CD4-positive, alpha-beta memory T cell (primary cell): ENCODE measurements at regions of chr13 and their contacts with region 1.

Region 1: GRCh38 chr13:97855570-97856303 is 97.7 kb upstream of the IPO5 start:
- DNase-seq: peak in 3 of 5 donors; percentile 3 to 9 (median 5)
- H3K4me3 ChIP-seq: no peak overlapping the region
- H3K4me3 Mint-ChIP-seq: no peak overlapping the region
- H3K27ac ChIP-seq: no peak overlapping the region
- H3K27ac Mint-ChIP-seq: no peak overlapping the region
- H3K4me1 ChIP-seq: no peaks in the 10 kb centered on the region
- H3K4me1 Mint-ChIP-seq: peaks cover 0 to 1% (median 0%) of the 10 kb centered on the region in 4 donors
- H3K27me3 ChIP-seq: no peaks in the 10 kb centered on the region
- H3K27me3 Mint-ChIP-seq: peaks cover 3 to 7% of the 10 kb centered on the region in 2 donors

Region 2: GRCh38 chr13:96500953-96501352 is 1354.8 kb before region 1 on chr13:
- CTCF ChIA-PET with region 1: no interaction called
- POLR2A ChIA-PET with region 1: no interaction called
- intact Hi-C with region 1: no loop called
- DNase-seq: no peak
- H3K4me3 ChIP-seq: no peak overlapping the region
- H3K4me3 Mint-ChIP-seq: no peak overlapping the region
- H3K27ac ChIP-seq: no peak overlapping the region
- H3K27ac Mint-ChIP-seq: no peak overlapping the region
- H3K4me1 ChIP-seq: no peaks in the 10 kb centered on the region
- H3K4me1 Mint-ChIP-seq: no peaks in the 10 kb centered on the region
- H3K27me3 ChIP-seq: no peaks in the 10 kb centered on the region
- H3K27me3 Mint-ChIP-seq: no peaks in the 10 kb centered on the region

Region 3: DNA sequence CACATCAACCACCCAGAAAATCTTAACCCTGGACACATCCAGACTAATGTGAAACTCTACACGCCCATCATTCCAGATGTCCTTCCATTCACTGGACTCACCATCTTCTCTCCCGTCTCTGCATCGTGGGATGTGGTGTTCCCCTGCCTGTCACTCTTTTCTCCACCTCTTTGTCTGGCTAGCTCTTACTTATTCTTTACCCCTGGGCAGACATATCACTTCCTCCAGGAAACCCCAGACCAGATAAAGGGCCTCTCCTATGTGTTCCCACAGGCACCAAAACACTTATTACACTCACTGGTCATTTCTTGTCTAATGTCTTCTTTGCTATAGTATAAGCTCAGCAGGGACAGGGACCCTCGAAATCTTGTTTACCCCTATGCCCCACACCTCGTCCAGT is 11.6 kb before region 1 on chr13:
- CTCF ChIA-PET with region 1: interaction called, 10 read pairs
- POLR2A ChIA-PET with region 1: no interaction called
- intact Hi-C with region 1: no loop called
- DNase-seq: no peak
- H3K4me3 ChIP-seq: no peak overlapping the region
- H3K4me3 Mint-ChIP-seq: no peak overlapping the region
- H3K27ac ChIP-seq: no peak overlapping the region
- H3K27ac Mint-ChIP-seq: no peak overlapping the region
- H3K4me1 ChIP-seq: no peaks in the 10 kb centered on the region
- H3K4me1 Mint-ChIP-seq: no peaks in the 10 kb centered on the region
- H3K27me3 ChIP-seq: no peaks in the 10 kb centered on the region
- H3K27me3 Mint-ChIP-seq: peaks cover 20 to 22% of the 10 kb centered on the region in 2 donors

Region 4: GRCh38 chr13:98123176-98123575 is 267.4 kb after region 1 on chr13:
- CTCF ChIA-PET with region 1: no interaction called
- POLR2A ChIA-PET with region 1: no interaction called
- intact Hi-C with region 1: no loop called
- DNase-seq: no peak
- H3K4me3 ChIP-seq: no peak overlapping the region
- H3K4me3 Mint-ChIP-seq: no peak overlapping the region
- H3K27ac ChIP-seq: no peak overlapping the region
- H3K27ac Mint-ChIP-seq: no peak overlapping the region
- H3K4me1 ChIP-seq: no peaks in the 10 kb centered on the region
- H3K4me1 Mint-ChIP-seq: no peaks in the 10 kb centered on the region
- H3K27me3 ChIP-seq: no peaks in the 10 kb centered on the region
- H3K27me3 Mint-ChIP-seq: peaks cover 5 to 8% of the 10 kb centered on the region in 2 donors